H1 (cell line): ENCODE measurements at regions of chr15 and their contacts with region 1.

Region 1: GRCh38 chr15:63945007-63945788 is 101.1 kb downstream of the DAPK2 start:
- DNase-seq: peak in 1 of 2 experiments; percentile 91
- H3K4me3 ChIP-seq: no peak overlapping the region
- H3K27ac ChIP-seq: no peak overlapping the region
- H3K4me1 ChIP-seq: peaks cover 0 to 3% (median 2%) of the 10 kb centered on the region in 4 experiments; a peak in 5 of 7 replicates
- H3K27me3 ChIP-seq: no peaks in the 10 kb centered on the region
- CTCF ChIP-seq: peak; percentile 85 to 91 (median 89)
- EP300 ChIP-seq: no peak
- POLR2A ChIP-seq: no peak
- RAD21 ChIP-seq: peak; percentile 62 to 79

Region 2: DNA sequence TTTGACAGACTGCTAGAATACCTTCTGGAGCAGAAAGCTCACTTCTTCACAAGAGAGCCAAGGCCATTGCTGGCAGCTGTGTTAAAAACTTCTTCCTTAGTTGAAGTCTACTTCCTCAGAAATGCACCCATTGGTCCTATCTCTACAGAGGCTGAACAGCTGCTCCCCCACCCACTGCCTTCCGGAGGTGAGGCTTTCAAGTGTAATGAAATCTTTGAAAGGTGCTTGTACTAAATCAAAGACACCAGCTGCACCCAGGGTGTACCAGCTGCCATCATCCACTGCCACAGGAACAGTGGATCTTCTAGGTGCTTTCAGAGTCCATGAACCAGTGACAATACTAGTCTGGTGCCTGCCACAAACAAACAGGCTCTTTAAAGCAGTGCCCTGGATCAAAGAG is 85.0 kb before region 1 on chr15:
- CTCF ChIA-PET with region 1: no interaction called
- POLR2A ChIA-PET with region 1: no interaction called
- DNase-seq: no peak
- H3K4me3 ChIP-seq: no peak overlapping the region
- H3K27ac ChIP-seq: no peak overlapping the region
- H3K4me1 ChIP-seq: no peaks in the 10 kb centered on the region
- H3K27me3 ChIP-seq: no peaks in the 10 kb centered on the region
- CTCF ChIP-seq: no peak
- EP300 ChIP-seq: no peak
- POLR2A ChIP-seq: no peak
- RAD21 ChIP-seq: no peak

Region 3: DNA sequence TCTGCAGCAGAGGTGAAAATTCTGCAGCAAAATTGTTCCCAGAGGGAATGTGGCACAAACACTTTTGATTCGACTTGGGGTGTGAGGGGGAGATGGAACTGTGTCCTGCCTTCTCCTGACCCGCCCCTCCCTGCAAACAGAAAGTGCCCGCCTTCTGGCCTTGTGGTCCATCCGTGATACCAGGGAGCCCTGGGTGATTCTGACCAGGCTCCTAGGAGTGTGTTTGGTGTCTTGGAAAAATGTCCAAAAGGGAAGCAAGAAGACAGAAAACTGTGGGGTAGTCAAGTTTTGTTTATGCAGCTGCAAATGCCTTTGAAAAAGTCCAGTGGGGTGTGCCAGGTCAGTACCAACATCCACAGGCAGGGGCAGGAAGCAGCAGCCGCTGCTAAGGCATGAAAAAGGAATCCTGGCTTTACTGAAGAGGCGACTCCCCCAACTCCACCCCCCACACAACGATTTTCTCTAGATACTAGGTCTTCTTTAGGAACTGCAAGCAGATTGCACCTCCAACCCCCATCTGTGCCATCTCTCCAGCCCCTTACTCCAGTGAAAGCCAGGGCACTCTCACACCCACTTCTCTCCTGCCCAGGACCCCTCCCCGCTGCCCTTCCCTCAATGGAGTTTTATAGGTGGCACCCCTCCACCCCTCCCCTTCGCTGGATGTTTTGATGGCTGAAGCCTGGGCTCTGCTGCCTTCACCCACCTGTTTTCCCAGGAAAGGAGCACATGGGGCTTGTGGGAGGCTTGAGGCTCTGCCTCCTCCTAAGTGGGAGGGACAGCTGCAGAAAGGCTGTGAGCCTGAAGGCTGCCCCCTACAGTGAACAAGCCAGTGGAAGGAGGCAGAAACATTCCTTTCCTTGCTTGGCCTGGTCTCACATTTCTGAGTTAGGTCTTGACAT is 29.1 kb before region 1 on chr15:
- CTCF ChIA-PET with region 1: interaction called, 72 read pairs
- POLR2A ChIA-PET with region 1: no interaction called
- DNase-seq: peak in 1 of 2 experiments; percentile 68
- H3K4me3 ChIP-seq: no peak overlapping the region
- H3K27ac ChIP-seq: no peak overlapping the region
- H3K4me1 ChIP-seq: peaks cover 0 to 18% (median 7%) of the 10 kb centered on the region in 4 experiments; a peak in 5 of 7 replicates
- H3K27me3 ChIP-seq: no peaks in the 10 kb centered on the region
- CTCF ChIP-seq: peak; percentile 27 to 53 (median 51); a peak in 3 of 4 replicates
- EP300 ChIP-seq: no peak
- POLR2A ChIP-seq: no peak
- RAD21 ChIP-seq: peak in 1 of 2 experiments; percentile 42; a peak in 1 of 4 replicates

Region 4: DNA sequence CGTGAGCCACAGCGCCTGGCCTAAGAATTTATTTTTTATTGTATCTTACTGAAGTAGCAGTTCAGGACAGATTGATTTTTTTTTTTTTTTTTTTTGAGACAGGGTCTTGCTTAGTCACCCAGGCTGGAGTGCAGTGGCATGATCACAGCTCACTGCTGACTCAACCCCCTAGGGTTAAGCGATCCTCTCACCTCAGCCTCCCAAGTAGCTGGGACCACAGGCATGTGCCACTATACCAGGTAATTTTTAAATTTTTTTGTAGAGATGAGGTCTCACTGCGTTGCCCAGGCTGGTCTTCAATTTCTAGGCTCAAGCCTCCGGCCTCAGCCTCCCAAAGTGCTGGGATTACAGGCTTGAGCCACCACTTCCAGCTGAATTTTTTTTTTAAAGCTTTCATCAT is 11.7 kb before region 1 on chr15:
- CTCF ChIA-PET with region 1: interaction called, 45 read pairs
- POLR2A ChIA-PET with region 1: interaction called, 4 read pairs
- DNase-seq: no peak
- H3K4me3 ChIP-seq: no peak overlapping the region
- H3K27ac ChIP-seq: no peak overlapping the region
- H3K4me1 ChIP-seq: no peaks in the 10 kb centered on the region; a peak in 1 of 7 replicates
- H3K27me3 ChIP-seq: no peaks in the 10 kb centered on the region
- CTCF ChIP-seq: no peak
- EP300 ChIP-seq: no peak
- POLR2A ChIP-seq: no peak
- RAD21 ChIP-seq: no peak

Region 5: GRCh38 chr15:63986751-63987341 is 41.6 kb after region 1 on chr15:
- CTCF ChIA-PET with region 1: interaction called, 102 read pairs
- POLR2A ChIA-PET with region 1: no interaction called
- DNase-seq: no peak
- H3K4me3 ChIP-seq: no peak overlapping the region
- H3K27ac ChIP-seq: no peak overlapping the region
- H3K4me1 ChIP-seq: no peaks in the 10 kb centered on the region; a peak in 1 of 7 replicates
- H3K27me3 ChIP-seq: no peaks in the 10 kb centered on the region
- CTCF ChIP-seq: no peak
- EP300 ChIP-seq: no peak
- POLR2A ChIP-seq: no peak
- RAD21 ChIP-seq: no peak

Region 6: GRCh38 chr15:64010719-64011118 is 65.5 kb after region 1 on chr15:
- CTCF ChIA-PET with region 1: interaction called, 18 read pairs
- POLR2A ChIA-PET with region 1: no interaction called
- DNase-seq: no peak
- H3K4me3 ChIP-seq: no peak overlapping the region
- H3K27ac ChIP-seq: no peak overlapping the region
- H3K4me1 ChIP-seq: peaks cover 0 to 3% (median 0%) of the 10 kb centered on the region in 4 experiments; a peak in 1 of 7 replicates
- H3K27me3 ChIP-seq: no peaks in the 10 kb centered on the region
- CTCF ChIP-seq: no peak
- EP300 ChIP-seq: no peak
- POLR2A ChIP-seq: no peak
- RAD21 ChIP-seq: no peak

Region 7: GRCh38 chr15:64067564-64068030 is 122.4 kb after region 1 on chr15:
- CTCF ChIA-PET with region 1: interaction called, 59 read pairs
- POLR2A ChIA-PET with region 1: interaction called, 3 read pairs
- DNase-seq: peak; percentile 25 to 93
- H3K4me3 ChIP-seq: no peak overlapping the region
- H3K27ac ChIP-seq: no peak overlapping the region
- H3K4me1 ChIP-seq: peaks cover 0 to 1% (median 0%) of the 10 kb centered on the region in 4 experiments; a peak in 2 of 7 replicates
- H3K27me3 ChIP-seq: no peaks in the 10 kb centered on the region
- CTCF ChIP-seq: peak in 2 of 3 experiments; percentile 73 to 88; a peak in 3 of 4 replicates
- EP300 ChIP-seq: no peak
- POLR2A ChIP-seq: no peak
- RAD21 ChIP-seq: peak; percentile 95 to 96